H1 (cell line): ENCODE measurements at regions of chr3 and their contacts with region 1.

Region 1: GRCh38 chr3:128133273-128134084 is 9.9 kb upstream of the RUVBL1 start:
- DNase-seq: peak in 1 of 2 experiments; percentile 72
- H3K4me3 ChIP-seq: no peak overlapping the region
- H3K27ac ChIP-seq: no peak overlapping the region
- H3K4me1 ChIP-seq: no peaks in the 10 kb centered on the region
- H3K27me3 ChIP-seq: no peaks in the 10 kb centered on the region
- CTCF ChIP-seq: peak; percentile 38 to 88 (median 82)
- EP300 ChIP-seq: no peak
- POLR2A ChIP-seq: no peak
- RAD21 ChIP-seq: peak; percentile 90 to 91

Region 2: DNA sequence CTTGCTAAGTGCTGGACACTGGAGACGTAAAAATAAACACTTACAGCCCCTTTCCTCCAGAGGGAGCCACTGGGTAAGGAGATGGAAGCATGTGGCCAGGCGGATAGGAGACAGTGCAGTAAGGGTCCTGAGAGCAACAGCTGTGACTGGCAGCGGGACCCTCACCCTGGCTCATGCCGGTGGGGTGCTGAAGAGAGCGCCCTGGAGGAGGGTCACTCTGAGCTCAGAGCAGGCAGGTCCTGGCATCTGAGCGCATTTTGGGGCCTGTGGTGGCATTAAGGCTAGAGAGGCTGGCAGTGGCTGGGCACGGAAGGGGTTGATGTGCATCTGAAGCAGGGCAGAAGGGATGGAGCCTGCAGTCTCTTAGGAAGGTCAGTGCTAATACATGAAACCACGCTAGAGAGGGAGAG is 65.3 kb before region 1 on chr3:
- CTCF ChIA-PET with region 1: interaction called, 23 read pairs
- POLR2A ChIA-PET with region 1: interaction called, 3 read pairs
- DNase-seq: peak in 1 of 2 experiments; percentile 58
- H3K4me3 ChIP-seq: no peak overlapping the region
- H3K27ac ChIP-seq: no peak overlapping the region
- H3K4me1 ChIP-seq: no peaks in the 10 kb centered on the region
- H3K27me3 ChIP-seq: no peaks in the 10 kb centered on the region
- CTCF ChIP-seq: peak in 2 of 3 experiments; percentile 64 to 72; a peak in 3 of 4 replicates
- EP300 ChIP-seq: no peak
- POLR2A ChIP-seq: no peak
- RAD21 ChIP-seq: peak; percentile 49 to 59

Region 3: DNA sequence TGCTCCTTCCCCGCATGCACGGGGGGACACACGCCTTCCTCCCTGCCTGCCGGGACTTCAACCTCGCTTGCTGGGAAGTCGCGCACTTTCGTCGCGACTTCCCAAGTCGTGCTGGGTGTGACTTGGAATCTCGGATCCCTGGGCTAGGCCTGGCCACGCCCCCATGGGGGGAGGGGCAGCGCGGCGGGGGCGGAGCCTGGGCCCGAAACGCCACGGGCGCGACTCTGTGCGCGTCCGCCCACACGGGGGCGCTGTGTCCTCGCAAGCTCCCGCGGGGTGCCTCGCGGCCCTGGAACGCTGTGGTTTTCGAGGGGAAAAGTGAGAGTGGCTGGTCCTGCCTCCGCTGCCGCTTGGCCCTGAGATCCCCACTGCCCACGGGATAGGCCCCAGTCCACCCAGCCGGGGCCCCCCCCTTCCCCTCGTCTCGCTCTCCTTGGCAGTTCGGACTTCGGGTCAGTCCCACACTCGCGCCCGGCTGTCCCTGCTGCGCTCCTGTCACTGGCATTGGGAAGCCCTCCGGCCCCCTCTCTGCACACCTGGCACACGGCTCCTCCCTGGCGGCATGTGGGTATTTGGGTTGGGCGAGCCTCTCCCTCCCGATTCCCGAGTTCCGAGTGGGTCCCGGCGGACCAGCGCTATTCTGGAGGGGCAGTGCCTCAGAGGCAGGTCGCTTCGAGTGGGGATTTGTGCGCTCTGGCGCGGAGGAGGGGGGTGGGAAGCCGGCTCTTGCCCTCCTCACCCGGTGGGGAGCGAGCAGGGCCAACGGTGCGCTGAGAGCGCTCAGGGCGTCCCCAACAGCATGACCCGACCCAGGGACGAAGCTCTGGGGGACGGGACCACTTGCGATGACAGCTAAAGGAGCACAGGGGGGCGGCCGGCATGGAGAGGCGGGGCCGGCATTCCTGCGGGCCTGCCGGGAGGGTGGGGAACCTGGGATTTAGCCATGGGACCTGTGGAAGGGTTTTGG is 57.7 kb before region 1 on chr3:
- CTCF ChIA-PET with region 1: interaction called, 23 read pairs
- POLR2A ChIA-PET with region 1: no interaction called
- DNase-seq: peak; percentile 82 to 100
- H3K4me3 ChIP-seq: peak overlapping the region; percentile 45 to 62 (median 54)
- H3K27ac ChIP-seq: no peak overlapping the region
- H3K4me1 ChIP-seq: peaks cover 5 to 22% (median 14%) of the 10 kb centered on the region in 4 experiments
- H3K27me3 ChIP-seq: peaks cover 0 to 9% (median 4%) of the 10 kb centered on the region in 4 experiments; a peak in 5 of 7 replicates
- CTCF ChIP-seq: peak in 2 of 3 experiments; percentile 71 to 83; a peak in 3 of 4 replicates
- EP300 ChIP-seq: peak in 1 of 2 experiments; percentile 28; a peak in 1 of 3 replicates
- POLR2A ChIP-seq: peak in 1 of 2 experiments; percentile 62; a peak in 2 of 3 replicates
- RAD21 ChIP-seq: peak; percentile 66 to 72

Region 4: GRCh38 chr3:128095222-128095703 is 38.2 kb before region 1 on chr3:
- CTCF ChIA-PET with region 1: interaction called, 22 read pairs
- POLR2A ChIA-PET with region 1: no interaction called
- DNase-seq: peak; percentile 63 to 86
- H3K4me3 ChIP-seq: peak overlapping the region in 1 of 4 experiments; percentile 17; a peak in 1 of 8 replicates
- H3K27ac ChIP-seq: no peak overlapping the region
- H3K4me1 ChIP-seq: peaks cover 9 to 30% (median 19%) of the 10 kb centered on the region in 4 experiments
- H3K27me3 ChIP-seq: no peaks in the 10 kb centered on the region
- CTCF ChIP-seq: peak; percentile 61 to 74 (median 64)
- EP300 ChIP-seq: no peak
- POLR2A ChIP-seq: no peak
- RAD21 ChIP-seq: peak; percentile 76 to 78

Region 5: DNA sequence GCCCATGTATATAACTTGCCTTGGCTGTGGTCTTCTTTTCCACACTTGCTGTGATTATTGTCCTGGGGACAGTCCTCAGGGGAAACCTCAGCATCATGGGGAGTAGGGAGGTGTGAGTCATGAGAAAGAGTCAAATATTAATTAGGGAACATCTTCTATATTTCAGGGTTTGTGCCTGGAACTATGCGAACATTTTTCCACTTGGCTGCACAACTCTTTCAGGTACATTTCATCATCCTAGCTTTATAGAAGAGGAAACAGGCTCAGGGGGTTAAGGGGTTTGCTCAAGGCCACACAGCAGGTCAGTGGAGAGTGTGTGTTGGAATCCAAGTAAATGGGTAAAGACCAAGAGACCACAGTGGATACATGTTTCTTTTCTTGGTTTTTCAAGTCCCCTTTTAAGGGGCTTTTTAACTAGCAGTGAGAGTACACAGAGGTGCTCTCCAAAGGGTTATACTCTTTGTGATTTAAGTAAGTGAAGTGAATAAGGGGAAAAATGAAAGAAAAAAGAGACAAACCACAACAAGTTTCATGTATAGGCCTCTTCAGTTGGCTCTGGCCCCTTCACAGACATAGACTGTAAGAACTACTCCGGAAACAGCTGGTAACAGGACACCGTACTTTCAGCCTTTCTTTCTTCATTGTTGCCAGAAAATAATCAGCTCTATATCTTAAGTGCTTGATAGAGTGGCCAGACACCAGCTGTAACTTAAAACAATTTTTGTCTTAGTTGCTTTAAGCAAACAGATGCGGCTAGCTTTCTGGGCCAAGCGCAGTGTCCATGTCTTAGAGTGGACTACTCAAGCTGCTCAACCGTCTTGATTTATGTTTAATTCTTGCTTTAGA is 84.4 kb after region 1 on chr3:
- CTCF ChIA-PET with region 1: no interaction called
- POLR2A ChIA-PET with region 1: no interaction called
- DNase-seq: no peak
- H3K4me3 ChIP-seq: no peak overlapping the region
- H3K27ac ChIP-seq: no peak overlapping the region
- H3K4me1 ChIP-seq: peaks cover 2 to 5% (median 4%) of the 10 kb centered on the region in 4 experiments; a peak in 3 of 7 replicates
- H3K27me3 ChIP-seq: no peaks in the 10 kb centered on the region; a peak in 1 of 7 replicates
- CTCF ChIP-seq: no peak
- EP300 ChIP-seq: no peak
- POLR2A ChIP-seq: no peak
- RAD21 ChIP-seq: no peak